ENCODE measurements at regions of chr19 and their contacts with region 1.

Region 1: DNA sequence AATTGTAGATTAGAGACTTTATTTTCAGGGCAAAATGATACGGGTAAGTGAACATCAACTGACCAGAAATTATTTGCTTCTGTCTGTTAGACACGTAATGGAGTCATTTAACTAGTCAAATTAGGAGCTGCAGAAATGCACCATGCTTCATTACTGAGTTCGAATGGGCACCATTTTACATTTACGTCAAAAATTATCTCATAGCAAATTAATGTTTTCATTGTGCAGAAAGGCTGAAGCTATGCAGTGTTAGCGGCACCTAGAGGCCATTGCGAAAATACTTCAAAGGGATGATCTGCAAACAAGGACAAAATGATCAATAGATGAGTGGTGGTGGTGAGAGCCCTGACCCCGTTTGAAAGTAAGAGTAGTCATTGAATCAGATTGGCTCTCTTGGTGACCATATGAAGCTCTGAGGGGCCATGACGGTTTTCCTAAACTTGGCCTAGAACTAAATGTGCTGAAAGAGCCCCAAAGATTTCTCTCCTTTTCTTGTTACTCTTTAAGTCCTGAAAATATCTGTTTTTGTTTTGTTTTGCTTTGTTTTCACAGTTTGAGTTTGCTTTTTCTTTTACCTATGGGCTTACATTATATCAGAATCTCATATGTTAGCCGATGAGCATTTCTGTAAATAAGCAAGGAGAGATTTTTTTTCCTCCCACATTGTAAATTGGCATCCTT is 277.9 kb downstream of the ZNF536 start:
- DNase-seq: no peak
- H3K4me3 ChIP-seq: no peak overlapping the region
- H3K27ac ChIP-seq: no peak overlapping the region
- H3K27me3 ChIP-seq: no peaks in the 10 kb centered on the region
- CTCF ChIP-seq: peak; percentile 84

Region 2: GRCh38 chr19:29735800-29736199 is 914.3 kb before region 1 on chr19:
- CTCF ChIA-PET with region 1: interaction called, 18 read pairs
- POLR2A ChIA-PET with region 1: no interaction called
- DNase-seq: no peak
- H3K4me3 ChIP-seq: no peak overlapping the region
- H3K27ac ChIP-seq: no peak overlapping the region
- H3K27me3 ChIP-seq: peaks cover 5% of the 10 kb centered on the region
- CTCF ChIP-seq: no peak

Region 3: DNA sequence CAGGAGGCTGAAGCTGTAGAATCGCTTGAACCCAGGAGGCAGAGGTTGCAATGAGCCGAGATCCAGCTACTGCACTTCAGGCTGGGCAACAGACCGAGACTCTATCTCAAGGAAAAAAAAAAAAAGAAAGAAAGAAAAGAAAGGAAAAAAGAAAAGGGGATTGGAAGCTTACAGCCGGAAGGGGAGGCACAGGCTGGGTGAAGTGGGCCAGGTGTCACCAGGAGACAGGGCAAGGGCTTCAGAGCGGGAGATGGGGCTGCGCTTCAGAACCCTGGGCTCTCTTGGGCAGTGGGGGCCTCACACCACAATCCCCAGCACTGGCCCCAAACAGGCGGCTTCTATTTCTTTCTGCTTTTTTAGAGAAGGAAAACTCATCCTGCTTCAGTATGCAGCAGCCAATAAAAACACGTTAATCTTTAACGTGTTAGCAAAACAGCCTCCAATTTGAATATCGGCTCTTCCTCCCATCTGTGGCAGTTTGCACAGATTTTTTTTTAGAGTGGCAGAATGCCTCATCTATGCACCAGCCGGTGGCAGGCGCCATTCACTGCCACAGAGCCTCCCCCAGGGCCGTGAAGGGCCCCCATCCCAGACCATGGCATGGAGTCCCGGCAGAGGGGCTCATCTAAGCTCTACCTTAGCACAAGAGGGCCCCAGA is 888.4 kb before region 1 on chr19:
- CTCF ChIA-PET with region 1: interaction called, 12 read pairs
- POLR2A ChIA-PET with region 1: no interaction called
- DNase-seq: no peak
- H3K4me3 ChIP-seq: no peak overlapping the region
- H3K27ac ChIP-seq: no peak overlapping the region
- H3K27me3 ChIP-seq: peaks cover 4% of the 10 kb centered on the region
- CTCF ChIP-seq: no peak

Region 4: DNA sequence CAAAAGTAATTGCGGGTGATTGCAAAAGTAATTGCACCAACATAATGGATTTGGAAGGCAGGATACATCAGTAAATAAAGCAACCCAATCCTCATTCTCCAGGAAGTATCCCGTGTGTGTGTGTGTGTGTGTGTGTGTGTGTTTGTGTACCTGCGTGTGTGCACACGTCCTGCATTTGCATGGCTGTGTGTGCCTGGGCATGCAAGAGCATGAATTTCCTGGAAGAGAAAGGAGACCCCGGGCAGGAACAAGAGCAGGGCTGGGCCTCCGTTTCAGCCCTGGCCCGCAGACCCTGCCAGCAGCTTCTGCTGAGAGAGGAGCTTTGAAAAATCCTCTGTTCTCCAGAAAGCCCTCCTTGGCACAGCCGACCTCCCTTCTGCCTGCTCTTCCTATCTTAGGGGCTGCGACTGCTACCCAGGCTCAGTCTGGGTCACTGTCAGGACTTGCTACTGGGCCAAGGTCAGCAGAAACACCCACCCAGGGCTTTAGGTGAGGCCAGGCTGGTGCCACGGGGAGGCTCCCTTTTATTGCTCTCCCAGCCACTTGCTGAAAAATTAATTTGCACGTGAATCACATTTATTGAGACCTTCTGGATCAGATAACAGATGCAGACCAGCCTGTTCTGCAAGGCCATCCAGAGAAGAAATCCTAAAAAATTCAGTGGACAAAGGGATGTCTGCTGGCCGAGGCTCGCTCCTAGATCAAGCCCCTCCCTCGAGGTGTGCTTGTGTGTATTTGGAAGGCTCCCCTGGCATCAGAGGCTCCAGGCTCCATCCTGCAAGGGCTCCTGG is 19.6 kb before region 1 on chr19:
- CTCF ChIA-PET with region 1: no interaction called
- POLR2A ChIA-PET with region 1: no interaction called
- DNase-seq: no peak
- H3K4me3 ChIP-seq: no peak overlapping the region
- H3K27ac ChIP-seq: no peak overlapping the region
- H3K27me3 ChIP-seq: no peaks in the 10 kb centered on the region
- CTCF ChIP-seq: no peak

Region 5: DNA sequence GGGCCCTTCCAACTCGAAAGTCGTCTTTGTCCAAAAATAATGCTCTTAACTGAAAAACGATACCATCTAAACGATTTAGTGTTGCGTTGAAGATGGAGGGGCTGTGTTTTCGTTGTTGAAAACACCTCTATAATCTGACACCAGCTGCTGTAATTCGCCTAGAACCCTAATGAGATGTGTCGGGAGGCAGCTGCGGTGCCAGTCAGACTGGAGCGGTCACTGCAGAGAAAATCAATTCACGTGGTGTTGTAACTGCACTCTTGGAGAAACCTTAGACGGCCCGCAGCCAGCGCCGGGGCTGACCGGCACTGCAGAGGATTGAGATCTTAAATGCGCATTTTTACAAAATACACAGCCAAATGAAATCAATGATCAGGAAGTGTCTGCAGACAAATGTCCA is 61.2 kb after region 1 on chr19:
- CTCF ChIA-PET with region 1: no interaction called
- POLR2A ChIA-PET with region 1: no interaction called
- DNase-seq: no peak
- H3K4me3 ChIP-seq: no peak overlapping the region
- H3K27ac ChIP-seq: no peak overlapping the region
- H3K27me3 ChIP-seq: no peaks in the 10 kb centered on the region
- CTCF ChIP-seq: no peak

Region 6: DNA sequence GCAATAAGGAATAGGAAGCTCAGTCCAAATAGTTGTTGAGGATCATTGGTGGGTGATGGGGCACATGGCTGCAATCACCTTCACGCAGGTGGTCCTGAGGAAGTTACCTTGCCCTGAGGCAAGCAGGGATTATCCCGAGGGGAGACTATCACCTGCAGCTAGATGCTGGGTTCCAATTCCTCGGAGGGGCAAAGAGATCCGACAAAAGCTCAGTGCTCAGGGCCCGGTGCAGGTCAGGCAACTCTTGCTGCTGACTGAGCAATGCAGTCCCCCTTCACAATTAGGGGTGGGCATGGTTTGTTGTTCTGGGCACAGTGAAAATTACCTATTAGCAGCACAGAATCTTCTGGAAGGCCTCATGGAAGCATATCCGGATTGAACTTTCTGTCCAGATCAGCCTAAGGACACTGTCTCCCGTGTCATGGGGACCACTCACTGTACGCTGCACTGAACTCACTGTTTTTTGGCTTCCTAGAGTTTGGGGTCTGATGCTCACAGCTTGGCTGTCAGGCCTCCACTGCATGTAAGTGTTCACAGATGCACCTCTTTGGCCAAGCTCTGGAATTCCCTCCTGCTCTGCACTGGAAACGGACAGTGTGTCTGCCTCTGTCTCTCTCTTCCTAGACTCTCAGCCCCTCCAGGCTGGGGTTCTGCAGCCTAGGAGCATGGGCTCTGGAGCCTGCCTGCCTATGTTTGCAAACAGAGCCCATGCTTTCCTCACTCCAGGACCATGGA is 94.8 kb after region 1 on chr19:
- CTCF ChIA-PET with region 1: no interaction called
- POLR2A ChIA-PET with region 1: no interaction called
- DNase-seq: no peak
- H3K4me3 ChIP-seq: no peak overlapping the region
- H3K27ac ChIP-seq: no peak overlapping the region
- H3K27me3 ChIP-seq: no peaks in the 10 kb centered on the region
- CTCF ChIP-seq: no peak

Measured in AG04450 (cell line).